ENCODE measurements at regions of chr17 and their contacts with region 1.

Region 1: GRCh38 chr17:78147315-78147998 is 1.3 kb downstream of the C17orf99 start:
- DNase-seq: peak in 1 of 9 experiments; percentile 57
- ATAC-seq: peak; percentile 71
- H3K4me3 ChIP-seq: no peak overlapping the region
- H3K4me3 Mint-ChIP-seq: no peak overlapping the region
- H3K27ac ChIP-seq: no peak overlapping the region
- H3K27ac Mint-ChIP-seq: peak overlapping the region; percentile 49
- H3K4me1 ChIP-seq: peaks cover 36% of the 10 kb centered on the region
- H3K4me1 Mint-ChIP-seq: peaks cover 25% of the 10 kb centered on the region
- H3K27me3 ChIP-seq: no peaks in the 10 kb centered on the region
- H3K27me3 Mint-ChIP-seq: no peaks in the 10 kb centered on the region
- CTCF ChIP-seq: no peak

Region 2: DNA sequence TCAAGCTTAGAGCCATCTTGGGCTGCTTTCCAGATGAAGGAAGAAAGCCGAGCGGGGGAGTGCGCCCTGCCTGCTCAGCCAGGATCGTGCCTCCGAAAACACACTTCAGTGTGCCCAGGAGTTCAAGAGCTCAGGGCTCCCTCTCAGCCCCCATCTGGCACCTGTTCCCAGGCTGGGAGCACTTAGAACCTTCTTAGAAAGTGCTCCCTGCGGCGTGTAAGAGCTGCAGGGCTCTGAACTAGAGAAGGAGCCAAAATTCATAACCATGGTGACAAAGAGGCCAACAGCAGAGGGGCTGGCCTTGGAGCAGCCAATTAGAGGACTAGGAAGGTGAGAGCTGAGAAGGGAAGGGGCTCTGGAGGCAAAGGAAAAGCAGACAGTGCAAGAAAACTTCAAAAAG is 248.0 kb before region 1 on chr17:
- CTCF ChIA-PET with region 1: no interaction called
- POLR2A ChIA-PET with region 1: no interaction called
- intact Hi-C with region 1: no loop called
- DNase-seq: no peak
- ATAC-seq: no peak
- H3K4me3 ChIP-seq: no peak overlapping the region
- H3K4me3 Mint-ChIP-seq: no peak overlapping the region
- H3K27ac ChIP-seq: no peak overlapping the region
- H3K27ac Mint-ChIP-seq: no peak overlapping the region
- H3K4me1 ChIP-seq: peaks cover 11% of the 10 kb centered on the region
- H3K4me1 Mint-ChIP-seq: peaks cover 14% of the 10 kb centered on the region
- H3K27me3 ChIP-seq: no peaks in the 10 kb centered on the region
- H3K27me3 Mint-ChIP-seq: no peaks in the 10 kb centered on the region
- CTCF ChIP-seq: no peak

Region 3: DNA sequence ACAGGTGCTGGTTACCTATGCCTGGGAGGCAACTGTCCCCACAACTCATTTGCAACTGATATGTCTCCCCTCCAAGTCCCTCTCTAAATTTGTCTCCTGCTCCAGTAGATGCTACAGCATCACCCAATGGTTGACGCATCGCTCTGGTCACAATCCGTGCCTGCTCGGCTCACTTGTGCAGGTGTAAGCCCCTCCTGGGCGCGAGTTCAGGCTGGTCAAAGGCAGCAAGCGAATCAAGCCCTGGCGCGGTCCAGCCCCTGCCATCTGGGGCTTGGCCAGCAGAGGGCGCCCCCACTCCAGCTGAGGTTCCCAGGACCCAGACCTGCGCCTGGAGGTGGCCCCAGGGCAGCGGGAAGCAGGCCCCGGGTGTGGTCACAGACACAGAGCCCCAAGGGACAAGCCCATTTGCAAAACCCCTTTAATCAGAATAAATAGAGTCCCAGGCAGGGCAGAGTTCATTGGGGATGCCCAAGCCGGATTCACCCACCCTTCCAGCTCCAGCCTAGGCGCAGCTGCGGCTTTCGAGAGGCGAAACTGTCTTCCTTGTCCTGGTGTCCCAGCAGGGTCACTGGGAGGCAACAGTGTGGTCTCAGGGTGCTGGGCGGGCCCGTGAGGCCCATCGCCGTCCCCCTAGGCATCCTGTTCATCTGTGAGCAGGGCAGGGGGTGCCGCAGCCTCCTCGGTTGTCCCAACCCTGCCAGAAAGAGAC is 34.8 kb before region 1 on chr17:
- CTCF ChIA-PET with region 1: interaction called, 181 read pairs
- POLR2A ChIA-PET with region 1: interaction called, 583 read pairs
- intact Hi-C with region 1: no loop called
- DNase-seq: peak; percentile 62 to 91 (median 78)
- ATAC-seq: peak; percentile 67
- H3K4me3 ChIP-seq: no peak overlapping the region
- H3K4me3 Mint-ChIP-seq: peak overlapping the region; percentile 42
- H3K27ac ChIP-seq: peak overlapping the region in 1 of 2 experiments; percentile 74
- H3K27ac Mint-ChIP-seq: peak overlapping the region; percentile 90
- H3K4me1 ChIP-seq: peaks cover 45% of the 10 kb centered on the region
- H3K4me1 Mint-ChIP-seq: peaks cover 42% of the 10 kb centered on the region
- H3K27me3 ChIP-seq: no peaks in the 10 kb centered on the region
- H3K27me3 Mint-ChIP-seq: no peaks in the 10 kb centered on the region
- CTCF ChIP-seq: peak; percentile 99

Measured in CD8-positive, alpha-beta T cell (primary cell).